ENCODE measurements at regions of chr13 and their contacts with region 1.

Region 1: GRCh38 chr13:59391696-59392095 is 772.0 kb downstream of the DIAPH3 start:
- DNase-seq: peak; percentile 74
- ATAC-seq: peak; percentile 96
- H3K4me3 ChIP-seq: no peak overlapping the region
- H3K27ac ChIP-seq: no peak overlapping the region
- H3K4me1 ChIP-seq: no peaks in the 10 kb centered on the region
- H3K27me3 ChIP-seq: no peaks in the 10 kb centered on the region
- CTCF ChIP-seq: peak; percentile 87
- POLR2A ChIP-seq: no peak
- RAD21 ChIP-seq: peak; percentile 84

Region 2: DNA sequence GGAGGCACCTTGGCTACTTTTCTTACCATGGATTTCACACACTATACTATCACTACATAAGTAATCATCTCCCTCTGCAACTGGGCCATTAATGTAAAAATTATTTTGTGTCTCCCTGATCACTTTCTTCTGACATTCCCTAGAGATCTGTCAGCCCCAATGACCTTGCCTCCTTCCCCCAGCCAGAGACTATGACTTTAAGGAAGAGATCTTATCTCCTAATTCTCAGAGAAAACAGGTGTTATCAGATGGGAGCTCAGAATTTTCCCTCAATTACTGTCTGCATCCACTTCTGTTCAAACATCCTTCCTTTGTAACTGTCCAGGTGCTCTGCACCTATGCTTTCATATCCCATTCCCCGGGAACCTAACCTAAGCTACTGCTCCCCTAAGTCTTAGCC is 374.5 kb after region 1 on chr13:
- CTCF ChIA-PET with region 1: interaction called, 8 read pairs
- POLR2A ChIA-PET with region 1: no interaction called
- dilution Hi-C with region 1: no loop called
- in situ Hi-C with region 1: loop called (anchors 10 kb)
- intact Hi-C with region 1: loop called (anchors 1 kb)
- DNase-seq: no peak
- ATAC-seq: no peak
- H3K4me3 ChIP-seq: no peak overlapping the region
- H3K27ac ChIP-seq: no peak overlapping the region
- H3K4me1 ChIP-seq: no peaks in the 10 kb centered on the region
- H3K27me3 ChIP-seq: no peaks in the 10 kb centered on the region
- CTCF ChIP-seq: no peak
- POLR2A ChIP-seq: no peak
- RAD21 ChIP-seq: no peak

Region 3: GRCh38 chr13:59906413-59907049 is 514.8 kb after region 1 on chr13:
- CTCF ChIA-PET with region 1: interaction called, 6 read pairs
- POLR2A ChIA-PET with region 1: no interaction called
- dilution Hi-C with region 1: no loop called
- in situ Hi-C with region 1: loop called (anchors 10 kb)
- intact Hi-C with region 1: loop called (anchors 1 kb)
- DNase-seq: peak; percentile 58
- ATAC-seq: peak; percentile 82
- H3K4me3 ChIP-seq: no peak overlapping the region
- H3K27ac ChIP-seq: no peak overlapping the region
- H3K4me1 ChIP-seq: no peaks in the 10 kb centered on the region
- H3K27me3 ChIP-seq: no peaks in the 10 kb centered on the region
- CTCF ChIP-seq: peak; percentile 80
- POLR2A ChIP-seq: no peak
- RAD21 ChIP-seq: peak; percentile 85

Region 4: DNA sequence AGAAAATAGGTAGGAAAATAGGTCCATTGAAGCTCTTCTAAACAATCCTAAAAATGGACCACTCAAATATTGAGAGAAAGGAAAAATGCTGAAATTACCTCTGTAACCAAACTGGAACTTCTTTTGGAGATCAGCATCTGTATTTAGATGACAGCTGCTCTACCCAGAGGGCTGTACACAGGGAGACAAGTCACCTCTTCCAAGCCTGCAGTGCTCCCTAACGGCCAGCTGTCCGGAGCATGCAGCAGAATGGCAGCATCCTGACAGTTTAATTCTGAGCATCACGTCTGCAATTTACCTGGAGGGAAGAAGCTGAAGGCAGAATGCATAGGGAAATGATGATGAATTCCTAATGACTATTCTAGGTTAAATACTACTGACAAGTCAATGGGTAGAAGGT is 834.8 kb after region 1 on chr13:
- CTCF ChIA-PET with region 1: no interaction called
- POLR2A ChIA-PET with region 1: no interaction called
- dilution Hi-C with region 1: no loop called
- in situ Hi-C with region 1: loop called (anchors 25 kb)
- intact Hi-C with region 1: loop called (anchors 2 kb)
- DNase-seq: peak; percentile 47
- ATAC-seq: peak; percentile 72
- H3K4me3 ChIP-seq: no peak overlapping the region
- H3K27ac ChIP-seq: no peak overlapping the region
- H3K4me1 ChIP-seq: no peaks in the 10 kb centered on the region
- H3K27me3 ChIP-seq: peaks cover 8% of the 10 kb centered on the region
- CTCF ChIP-seq: peak; percentile 57
- POLR2A ChIP-seq: no peak
- RAD21 ChIP-seq: peak; percentile 68

Region 5: DNA sequence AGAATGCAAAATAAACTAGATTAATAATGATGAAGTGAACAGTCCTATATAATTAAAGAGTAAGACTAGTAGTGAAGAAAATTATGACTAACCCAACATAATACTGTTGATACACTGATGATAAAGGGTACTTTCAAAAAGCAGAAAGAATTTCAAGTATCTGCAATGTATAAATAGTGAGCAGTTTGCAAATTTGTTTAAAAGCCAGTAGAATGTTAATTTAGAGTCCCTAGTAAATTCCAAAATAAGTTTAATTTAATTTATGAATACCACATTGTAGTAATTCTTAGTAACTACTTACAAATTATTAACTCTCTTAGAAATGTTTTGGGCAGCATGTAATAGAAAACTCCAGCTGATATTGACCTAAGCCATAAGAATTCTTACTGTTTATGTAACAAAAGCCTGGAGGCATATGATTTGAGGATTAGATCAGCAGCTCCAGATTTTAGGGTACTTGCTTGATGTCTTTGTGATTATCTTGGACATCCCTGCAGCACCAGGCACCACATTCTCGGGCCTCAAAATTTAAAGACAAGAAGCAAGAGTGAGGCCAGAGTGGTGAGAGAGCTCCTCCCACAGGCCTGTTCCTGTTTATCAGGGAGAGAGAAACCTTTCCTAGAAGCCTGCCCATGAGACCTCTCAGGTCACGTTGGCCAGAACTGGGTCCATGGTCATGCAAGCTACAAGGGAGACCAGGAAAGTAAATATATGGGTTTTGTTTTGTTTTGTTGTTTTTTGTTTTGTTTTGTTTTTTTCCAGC is 937.7 kb after region 1 on chr13:
- CTCF ChIA-PET with region 1: no interaction called
- POLR2A ChIA-PET with region 1: no interaction called
- dilution Hi-C with region 1: no loop called
- in situ Hi-C with region 1: loop called (anchors 25 kb)
- intact Hi-C with region 1: loop called (anchors 2 kb)
- DNase-seq: peak; percentile 16
- ATAC-seq: peak; percentile 90
- H3K4me3 ChIP-seq: no peak overlapping the region
- H3K27ac ChIP-seq: peak overlapping the region; percentile 1; the same call in 1 of the 2 replicates
- H3K4me1 ChIP-seq: peaks cover 2% of the 10 kb centered on the region; the same call in 1 of the 2 replicates
- H3K27me3 ChIP-seq: no peaks in the 10 kb centered on the region; the same call in 1 of the 2 replicates
- CTCF ChIP-seq: peak; percentile 50
- POLR2A ChIP-seq: no peak
- RAD21 ChIP-seq: peak; percentile 61

Region 6: GRCh38 chr13:60335531-60335930 is 943.8 kb after region 1 on chr13:
- CTCF ChIA-PET with region 1: no interaction called
- POLR2A ChIA-PET with region 1: no interaction called
- dilution Hi-C with region 1: no loop called
- in situ Hi-C with region 1: loop called (anchors 25 kb)
- intact Hi-C with region 1: loop called (anchors 2 kb)
- DNase-seq: peak; percentile 22
- ATAC-seq: peak; percentile 67
- H3K4me3 ChIP-seq: no peak overlapping the region
- H3K27ac ChIP-seq: no peak overlapping the region
- H3K4me1 ChIP-seq: no peaks in the 10 kb centered on the region
- H3K27me3 ChIP-seq: peaks cover 2% of the 10 kb centered on the region
- CTCF ChIP-seq: peak; percentile 69
- POLR2A ChIP-seq: no peak
- RAD21 ChIP-seq: peak; percentile 59

Region 7: GRCh38 chr13:60431108-60431700 is 1039.5 kb after region 1 on chr13:
- CTCF ChIA-PET with region 1: no interaction called
- POLR2A ChIA-PET with region 1: no interaction called
- dilution Hi-C with region 1: no loop called
- in situ Hi-C with region 1: no loop called
- intact Hi-C with region 1: loop called (anchors 5 kb)
- DNase-seq: peak; percentile 72
- ATAC-seq: peak; percentile 95
- H3K4me3 ChIP-seq: no peak overlapping the region
- H3K27ac ChIP-seq: no peak overlapping the region
- H3K4me1 ChIP-seq: no peaks in the 10 kb centered on the region
- H3K27me3 ChIP-seq: no peaks in the 10 kb centered on the region
- CTCF ChIP-seq: peak; percentile 94
- POLR2A ChIP-seq: no peak
- RAD21 ChIP-seq: peak; percentile 83